Mammary epithelial cell (primary cell): ENCODE measurements at regions of chr3 and their contacts with region 1.

Region 1: GRCh38 chr3:186617038-186617946 is 4.4 kb downstream of the AHSG start:
- DNase-seq: peak; percentile 98
- H3K4me3 ChIP-seq: peak overlapping the region; percentile 42 to 55 (median 48)
- H3K27ac ChIP-seq: peak overlapping the region; percentile 69
- H3K4me1 ChIP-seq: peaks cover 25% of the 10 kb centered on the region
- H3K27me3 ChIP-seq: no peaks in the 10 kb centered on the region
- CTCF ChIP-seq: peak; percentile 97 to 98

Region 2: DNA sequence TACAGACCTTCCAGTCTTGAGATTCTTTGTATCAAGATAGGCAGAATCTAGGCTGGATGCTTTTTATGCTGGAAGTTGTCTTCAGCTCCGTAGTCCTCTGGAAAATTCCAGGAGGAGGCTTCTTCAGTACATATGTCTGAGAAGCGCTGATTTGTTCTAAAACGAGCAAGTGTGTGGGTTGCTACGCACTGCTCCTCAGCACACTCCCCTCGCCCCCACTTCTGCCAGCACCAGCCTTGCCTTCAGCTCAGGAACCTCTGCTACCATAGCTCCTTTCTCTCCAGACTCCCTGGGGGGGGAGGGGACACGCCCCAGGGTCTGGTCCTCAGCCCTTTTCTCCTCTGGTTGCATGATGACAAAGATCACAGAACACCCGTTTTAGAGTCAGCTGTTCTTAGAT is 604.0 kb before region 1 on chr3:
- CTCF ChIA-PET with region 1: no interaction called
- dilution Hi-C with region 1: no loop called
- in situ Hi-C with region 1: no loop called
- intact Hi-C with region 1: no loop called
- DNase-seq: no peak
- H3K4me3 ChIP-seq: no peak overlapping the region
- H3K27ac ChIP-seq: no peak overlapping the region
- H3K4me1 ChIP-seq: no peaks in the 10 kb centered on the region
- H3K27me3 ChIP-seq: no peaks in the 10 kb centered on the region
- CTCF ChIP-seq: no peak

Region 3: GRCh38 chr3:186277268-186277909 is 339.9 kb before region 1 on chr3:
- CTCF ChIA-PET with region 1: no interaction called
- dilution Hi-C with region 1: no loop called
- in situ Hi-C with region 1: no loop called
- intact Hi-C with region 1: loop called (anchors 5 kb)
- DNase-seq: peak; percentile 48
- H3K4me3 ChIP-seq: no peak overlapping the region
- H3K27ac ChIP-seq: no peak overlapping the region
- H3K4me1 ChIP-seq: no peaks in the 10 kb centered on the region
- H3K27me3 ChIP-seq: no peaks in the 10 kb centered on the region
- CTCF ChIP-seq: peak; percentile 54 to 67

Region 4: GRCh38 chr3:186442162-186442561 is 175.1 kb before region 1 on chr3:
- CTCF ChIA-PET with region 1: no interaction called
- dilution Hi-C with region 1: no loop called
- in situ Hi-C with region 1: no loop called
- intact Hi-C with region 1: no loop called
- DNase-seq: no peak
- H3K4me3 ChIP-seq: no peak overlapping the region
- H3K27ac ChIP-seq: no peak overlapping the region
- H3K4me1 ChIP-seq: no peaks in the 10 kb centered on the region
- H3K27me3 ChIP-seq: no peaks in the 10 kb centered on the region
- CTCF ChIP-seq: no peak

Region 5: GRCh38 chr3:186570096-186570940 is 47.0 kb before region 1 on chr3 and contains the start of gene DNAJB11:
- CTCF ChIA-PET with region 1: interaction called, 4 read pairs
- dilution Hi-C with region 1: no loop called
- in situ Hi-C with region 1: no loop called
- intact Hi-C with region 1: loop called (anchors 2 kb)
- DNase-seq: peak; percentile 100
- H3K4me3 ChIP-seq: peak within 1 kb of the TSS; percentile 66 to 93 (median 69)
- H3K27ac ChIP-seq: peak within 1 kb of the TSS; percentile 87
- H3K4me1 ChIP-seq: peaks cover 25% of the 10 kb centered on the region
- H3K27me3 ChIP-seq: no peaks in the 10 kb centered on the region
- CTCF ChIP-seq: no peak
- total RNA-seq, gene DNAJB11: 27.0 to 70.8 TPM

Region 6: DNA sequence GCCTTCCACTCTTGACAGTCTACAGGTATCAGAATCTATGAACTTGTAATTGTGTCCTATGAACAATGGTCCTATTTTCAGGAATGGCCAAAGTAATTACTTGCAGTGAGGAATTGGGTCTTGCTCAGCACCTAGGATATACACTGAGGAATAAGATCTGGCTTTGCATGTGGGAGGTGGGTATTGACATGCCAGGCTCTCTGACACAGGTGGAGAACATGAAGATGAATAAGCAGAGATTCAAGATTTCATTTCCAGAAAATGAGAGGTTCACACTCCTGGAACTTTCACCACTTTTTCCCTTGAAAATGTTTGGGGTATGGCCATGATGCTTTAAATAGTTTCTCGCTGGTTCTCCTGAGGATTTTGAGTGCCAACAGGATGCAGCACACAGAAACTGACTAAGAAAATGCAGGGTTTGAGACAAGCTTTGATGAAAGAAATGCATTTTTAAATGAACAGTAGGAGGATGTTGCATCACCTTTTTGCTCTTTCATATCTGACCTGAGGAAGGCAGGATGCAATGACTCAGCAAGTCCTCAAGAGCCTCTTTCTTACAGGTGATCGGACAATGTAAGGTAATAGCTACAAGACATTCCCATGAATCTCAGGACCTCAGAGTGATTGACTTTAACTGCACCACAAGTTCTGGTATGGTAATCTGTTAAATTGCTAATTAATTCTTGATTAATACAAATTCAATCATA is 52.2 kb after region 1 on chr3:
- CTCF ChIA-PET with region 1: no interaction called
- dilution Hi-C with region 1: no loop called
- in situ Hi-C with region 1: no loop called
- intact Hi-C with region 1: loop called (anchors 1 kb)
- DNase-seq: peak; percentile 75
- H3K4me3 ChIP-seq: no peak overlapping the region
- H3K27ac ChIP-seq: peak overlapping the region; percentile 23
- H3K4me1 ChIP-seq: peaks cover 27% of the 10 kb centered on the region
- H3K27me3 ChIP-seq: no peaks in the 10 kb centered on the region
- CTCF ChIP-seq: no peak

Region 7: GRCh38 chr3:186754006-186754405 is 136.7 kb after region 1 on chr3:
- CTCF ChIA-PET with region 1: no interaction called
- dilution Hi-C with region 1: no loop called
- in situ Hi-C with region 1: loop called in 1 of 2 experiments (anchors 10 kb)
- intact Hi-C with region 1: loop called (anchors 1 kb)
- DNase-seq: no peak
- H3K4me3 ChIP-seq: no peak overlapping the region
- H3K27ac ChIP-seq: peak overlapping the region; percentile 83
- H3K4me1 ChIP-seq: peaks cover 15% of the 10 kb centered on the region
- H3K27me3 ChIP-seq: no peaks in the 10 kb centered on the region
- CTCF ChIP-seq: no peak

Region 8: DNA sequence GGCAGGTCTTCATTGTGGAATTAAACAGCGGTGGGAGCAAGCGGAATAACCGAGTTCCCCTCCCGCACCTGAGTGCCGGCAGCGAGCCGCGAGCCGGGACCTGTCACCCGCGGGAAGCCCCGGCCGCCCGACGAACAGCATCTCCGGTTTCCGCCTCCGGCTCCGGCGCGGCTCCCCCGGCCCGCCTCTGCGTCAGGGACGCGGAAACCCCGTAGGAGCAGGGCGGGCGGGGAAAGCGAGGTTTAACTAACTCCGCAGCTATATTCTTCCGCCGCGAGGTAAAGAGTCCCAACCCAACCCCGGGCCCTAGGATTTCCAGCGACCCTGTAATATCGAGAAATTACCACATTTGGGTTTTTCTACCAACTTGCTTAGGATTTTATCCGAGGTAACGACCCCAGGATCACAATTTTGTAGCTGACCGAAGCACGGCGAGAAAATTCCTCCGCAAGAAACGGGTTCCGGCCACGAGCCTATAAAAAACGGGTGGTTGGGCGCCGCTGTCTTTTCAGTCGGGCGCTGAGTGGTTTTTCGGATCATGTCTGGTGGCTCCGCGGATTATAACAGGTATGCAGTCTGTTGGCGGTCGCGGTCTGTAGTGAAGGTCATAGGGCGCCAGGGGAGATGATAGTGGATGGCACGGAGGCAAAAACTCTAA is 165.9 kb after region 1 on chr3 and contains the start of gene EIF4A2:
- CTCF ChIA-PET with region 1: no interaction called
- dilution Hi-C with region 1: loop called (anchors 5 kb)
- in situ Hi-C with region 1: no loop called
- intact Hi-C with region 1: loop called (anchors 1 kb)
- DNase-seq: peak; percentile 88
- H3K4me3 ChIP-seq: peak within 1 kb of the TSS; percentile 66 to 81 (median 77)
- H3K27ac ChIP-seq: peak within 1 kb of the TSS; percentile 96
- H3K4me1 ChIP-seq: peaks cover 24% of the 10 kb centered on the region
- H3K27me3 ChIP-seq: no peaks in the 10 kb centered on the region
- CTCF ChIP-seq: no peak
- total RNA-seq, gene EIF4A2: 291 to 441 TPM

Region 9: DNA sequence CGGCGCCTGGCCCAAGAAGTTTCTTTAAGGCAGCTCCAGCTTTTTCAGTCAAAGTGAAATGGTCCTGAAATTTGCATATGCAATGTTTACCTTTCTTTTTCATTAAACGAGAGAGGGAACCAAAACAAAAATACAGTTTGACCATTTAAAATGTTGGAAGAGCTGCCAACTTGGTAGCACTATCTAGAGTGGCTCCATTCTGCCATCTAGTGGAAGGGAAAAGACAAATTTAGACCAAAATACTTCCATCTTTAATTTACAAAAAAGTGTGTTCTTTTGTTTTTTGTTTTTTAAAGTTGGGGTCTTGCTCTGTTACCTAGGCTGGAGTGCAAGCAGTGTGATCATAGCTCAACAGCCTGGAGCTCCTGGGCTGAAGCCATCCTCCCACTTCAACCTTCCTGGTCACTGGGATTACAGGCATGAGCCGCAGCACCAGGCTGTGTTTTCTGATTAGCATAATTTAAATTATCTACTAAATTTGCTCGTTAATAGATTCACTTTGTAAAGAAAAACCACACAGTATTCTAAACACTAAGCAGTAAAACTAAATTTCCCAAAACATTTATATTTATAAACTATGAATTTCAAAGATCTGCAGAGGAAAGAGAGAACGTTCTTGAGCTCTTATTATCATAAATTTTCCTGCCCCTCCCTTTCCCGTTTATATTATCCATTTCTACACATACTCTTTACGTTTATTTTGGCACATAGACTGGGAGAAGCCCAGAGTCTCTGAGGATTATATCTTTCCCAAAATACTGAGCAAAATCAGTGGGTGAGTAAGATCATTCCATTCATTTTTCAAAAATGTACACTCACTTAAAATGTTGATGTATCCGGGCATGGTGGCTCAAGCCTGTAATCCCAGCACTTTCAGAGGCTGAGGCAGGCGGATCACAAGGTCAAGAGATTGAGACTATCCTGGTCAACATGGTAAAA is 204.4 kb after region 1 on chr3:
- CTCF ChIA-PET with region 1: interaction called, 13 read pairs
- dilution Hi-C with region 1: no loop called
- in situ Hi-C with region 1: loop called in 1 of 2 experiments (anchors 10 kb)
- intact Hi-C with region 1: loop called (anchors 1 kb)
- DNase-seq: peak; percentile 24
- H3K4me3 ChIP-seq: no peak overlapping the region
- H3K27ac ChIP-seq: no peak overlapping the region
- H3K4me1 ChIP-seq: peaks cover 7% of the 10 kb centered on the region
- H3K27me3 ChIP-seq: no peaks in the 10 kb centered on the region
- CTCF ChIP-seq: peak; percentile 39 to 70